Right cardiac atrium (tissue), 5 donors: ENCODE measurements at regions of chr5 and their contacts with region 1.

Region 1: GRCh38 chr5:64612344-64612961 is 77.8 kb upstream of the SHISAL2B start:
- DNase-seq: peak in 1 of 3 donors; percentile 30
- ATAC-seq: peak; percentile 56 to 72
- H3K4me3 ChIP-seq: no peak overlapping the region
- H3K27ac ChIP-seq: no peak overlapping the region
- H3K4me1 ChIP-seq: no peaks in the 10 kb centered on the region
- H3K27me3 ChIP-seq: no peaks in the 10 kb centered on the region

Region 2: GRCh38 chr5:64074533-64074932 is 537.9 kb before region 1 on chr5:
- intact Hi-C with region 1: loop called in 1 of 4 experiments (anchors 10 kb)
- DNase-seq: no peak
- ATAC-seq: peak in 1 of 2 donors; percentile 26
- H3K4me3 ChIP-seq: no peak overlapping the region
- H3K27ac ChIP-seq: no peak overlapping the region
- H3K4me1 ChIP-seq: no peaks in the 10 kb centered on the region
- H3K27me3 ChIP-seq: no peaks in the 10 kb centered on the region

Region 3: DNA sequence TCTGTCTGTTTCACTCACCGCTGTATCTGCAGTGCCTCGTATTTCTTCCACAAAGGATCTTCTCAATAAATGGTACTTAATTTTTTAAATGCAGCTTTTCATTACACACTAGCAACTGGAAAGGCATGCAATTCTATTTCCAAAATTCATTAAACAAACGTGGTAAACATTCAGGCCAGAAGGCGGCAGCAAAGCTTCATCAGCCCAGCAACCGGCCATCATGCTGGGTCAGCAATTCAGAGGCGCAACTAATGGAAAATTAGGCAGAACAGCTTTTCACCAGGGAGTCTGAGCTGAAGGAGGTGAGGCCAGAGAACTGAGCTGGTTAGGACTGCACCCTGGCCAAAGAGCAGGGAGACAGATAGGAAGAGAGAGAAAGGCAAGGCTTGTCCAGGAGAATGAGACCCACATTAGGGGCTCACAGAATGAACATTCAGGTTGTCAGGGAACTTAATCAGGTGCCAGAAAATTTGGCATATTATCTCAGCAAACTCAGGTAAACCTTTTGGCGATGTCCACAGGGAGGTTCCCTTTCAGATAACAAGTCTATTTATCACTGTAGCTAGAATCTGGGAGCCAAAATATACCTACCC is 464.5 kb before region 1 on chr5:
- intact Hi-C with region 1: loop called in 3 of 4 experiments (anchors 5 to 10 kb)
- DNase-seq: peak; percentile 71 to 84 (median 84)
- ATAC-seq: peak; percentile 71 to 76
- H3K4me3 ChIP-seq: no peak overlapping the region
- H3K27ac ChIP-seq: no peak overlapping the region
- H3K4me1 ChIP-seq: no peaks in the 10 kb centered on the region
- H3K27me3 ChIP-seq: no peaks in the 10 kb centered on the region

Region 4: DNA sequence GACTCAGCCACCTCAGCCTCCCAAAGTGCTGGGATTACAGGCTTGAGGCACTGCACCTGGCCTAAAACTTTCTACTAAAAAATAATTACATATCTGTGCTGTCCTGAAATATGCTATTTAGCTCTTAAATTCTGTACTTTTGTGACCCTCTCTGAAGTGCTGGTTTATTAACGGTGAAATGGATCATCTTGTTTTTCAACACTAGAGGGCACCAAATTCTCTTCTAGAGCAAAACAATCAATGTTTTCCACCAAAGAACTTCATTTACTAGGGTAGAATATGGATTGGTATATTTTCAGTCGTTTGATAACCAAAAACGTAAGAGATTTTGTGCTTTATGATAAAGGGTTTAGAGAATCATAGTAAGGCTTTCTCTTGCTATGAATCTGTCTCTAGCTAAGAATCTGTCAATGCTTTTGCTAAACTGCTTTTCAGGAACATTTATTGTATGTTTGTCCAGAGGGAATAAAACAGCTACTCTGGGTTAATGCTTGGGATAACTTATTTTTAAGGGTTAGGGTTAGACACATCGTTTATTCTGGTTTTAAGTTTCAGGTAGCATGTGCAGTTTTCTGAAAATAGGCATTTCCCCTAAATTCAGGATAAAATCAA is 383.2 kb before region 1 on chr5:
- intact Hi-C with region 1: loop called (anchors 5 to 10 kb)
- DNase-seq: no peak
- ATAC-seq: peak in 1 of 2 donors; percentile 18
- H3K4me3 ChIP-seq: no peak overlapping the region
- H3K27ac ChIP-seq: no peak overlapping the region
- H3K4me1 ChIP-seq: no peaks in the 10 kb centered on the region
- H3K27me3 ChIP-seq: no peaks in the 10 kb centered on the region

Region 5: DNA sequence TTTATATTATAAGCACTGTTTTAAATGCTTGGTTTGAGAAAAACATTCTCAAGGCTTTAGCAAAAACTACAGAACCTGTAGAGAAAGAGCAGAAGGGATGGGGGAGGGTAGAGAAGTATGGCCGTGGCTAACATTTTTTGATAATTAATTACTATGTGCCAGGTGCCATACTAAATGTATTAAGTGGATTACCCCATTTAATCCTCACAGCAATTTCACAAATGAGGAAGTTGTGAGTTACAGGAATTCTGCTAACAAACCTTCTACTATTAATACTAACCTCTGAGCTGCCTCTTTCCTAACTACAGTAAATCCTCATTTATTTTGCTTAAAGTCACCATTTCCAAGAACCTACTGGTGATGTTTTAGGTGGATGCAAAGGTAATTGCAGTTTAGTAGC is 288.9 kb before region 1 on chr5:
- intact Hi-C with region 1: no loop called
- DNase-seq: no peak
- ATAC-seq: no peak
- H3K4me3 ChIP-seq: no peak overlapping the region
- H3K27ac ChIP-seq: no peak overlapping the region
- H3K4me1 ChIP-seq: no peaks in the 10 kb centered on the region
- H3K27me3 ChIP-seq: no peaks in the 10 kb centered on the region

Region 6: GRCh38 chr5:64566310-64566916 is 46.0 kb before region 1 on chr5:
- intact Hi-C with region 1: no loop called
- DNase-seq: no peak
- ATAC-seq: no peak
- H3K4me3 ChIP-seq: no peak overlapping the region
- H3K27ac ChIP-seq: no peak overlapping the region
- H3K4me1 ChIP-seq: peaks cover 4% of the 10 kb centered on the region
- H3K27me3 ChIP-seq: no peaks in the 10 kb centered on the region